Activated CD4-positive, alpha-beta T cell treated with anti-CD3 and anti-CD28 coated beads, Interleukin-2, amount 10 ng/mL, durations not matched to agents 24 days and 14 days (primary cell): ENCODE measurements at regions of chr6 and their contacts with region 1.

Region 1: DNA sequence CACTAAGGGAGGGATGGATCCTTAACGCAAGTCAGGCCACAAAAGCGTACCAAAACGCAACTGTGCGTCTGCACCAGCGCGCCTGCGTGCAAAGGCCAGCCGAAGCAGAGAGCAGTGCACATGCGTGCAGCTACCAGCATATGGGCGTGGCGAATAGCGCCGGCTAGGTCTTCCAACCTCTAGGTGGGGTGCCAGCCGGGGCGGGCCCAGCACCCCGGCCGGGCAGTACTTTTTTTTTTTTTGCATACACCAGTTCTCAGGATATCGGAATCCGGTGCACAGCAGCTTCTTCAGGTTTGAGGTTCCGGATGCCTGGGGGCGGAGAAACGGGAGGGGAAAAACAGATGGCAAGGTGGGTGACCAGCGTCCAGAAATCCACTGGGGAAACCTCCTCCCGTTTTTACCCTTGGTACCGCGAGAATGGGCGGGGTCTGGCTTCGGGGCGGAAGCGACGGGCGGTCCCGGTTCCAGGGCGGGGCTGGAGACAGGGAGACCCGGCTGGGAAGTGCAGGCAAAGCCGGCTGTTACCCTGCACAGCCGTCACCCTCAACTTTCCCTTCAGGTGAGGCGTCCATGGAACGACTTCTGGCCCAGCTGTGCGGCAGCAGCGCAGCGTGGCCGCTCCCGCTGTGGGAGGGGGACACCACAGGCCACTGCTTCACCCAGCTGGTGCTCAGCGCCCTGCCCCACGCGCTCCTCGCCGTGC is at the start of gene ABCC10:
- DNase-seq: peak; percentile 98
- H3K4me3 Mint-ChIP-seq: peak within 1 kb of the TSS; percentile 98
- H3K27ac Mint-ChIP-seq: peak within 1 kb of the TSS; percentile 98
- H3K4me1 Mint-ChIP-seq: peaks cover 13% of the 10 kb centered on the region
- H3K27me3 Mint-ChIP-seq: no peaks in the 10 kb centered on the region
- total RNA-seq, gene ABCC10: 38.2 and 40.0 TPM in 2 replicates

Region 2: DNA sequence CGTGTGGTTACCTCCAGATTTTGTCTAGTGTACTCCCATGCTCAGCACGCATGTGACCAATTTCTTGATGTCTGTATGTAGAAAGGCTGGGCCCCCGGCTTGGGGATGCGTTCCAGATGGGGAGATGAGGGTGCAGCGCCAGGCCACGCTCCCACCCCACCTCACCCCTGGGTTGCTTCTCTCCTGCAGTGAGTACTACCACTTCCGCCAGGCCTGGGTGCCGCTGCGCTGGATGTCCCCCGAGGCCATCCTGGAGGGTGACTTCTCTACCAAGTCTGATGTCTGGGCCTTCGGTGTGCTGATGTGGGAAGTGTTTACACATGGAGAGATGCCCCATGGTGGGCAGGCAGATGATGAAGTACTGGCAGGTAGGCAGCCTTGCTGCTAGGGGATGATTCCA is 268.0 kb before region 1 on chr6:
- intact Hi-C with region 1: no loop called
- DNase-seq: no peak
- H3K4me3 Mint-ChIP-seq: no peak overlapping the region
- H3K27ac Mint-ChIP-seq: no peak overlapping the region
- H3K4me1 Mint-ChIP-seq: no peaks in the 10 kb centered on the region
- H3K27me3 Mint-ChIP-seq: peaks cover 3% of the 10 kb centered on the region

Region 3: DNA sequence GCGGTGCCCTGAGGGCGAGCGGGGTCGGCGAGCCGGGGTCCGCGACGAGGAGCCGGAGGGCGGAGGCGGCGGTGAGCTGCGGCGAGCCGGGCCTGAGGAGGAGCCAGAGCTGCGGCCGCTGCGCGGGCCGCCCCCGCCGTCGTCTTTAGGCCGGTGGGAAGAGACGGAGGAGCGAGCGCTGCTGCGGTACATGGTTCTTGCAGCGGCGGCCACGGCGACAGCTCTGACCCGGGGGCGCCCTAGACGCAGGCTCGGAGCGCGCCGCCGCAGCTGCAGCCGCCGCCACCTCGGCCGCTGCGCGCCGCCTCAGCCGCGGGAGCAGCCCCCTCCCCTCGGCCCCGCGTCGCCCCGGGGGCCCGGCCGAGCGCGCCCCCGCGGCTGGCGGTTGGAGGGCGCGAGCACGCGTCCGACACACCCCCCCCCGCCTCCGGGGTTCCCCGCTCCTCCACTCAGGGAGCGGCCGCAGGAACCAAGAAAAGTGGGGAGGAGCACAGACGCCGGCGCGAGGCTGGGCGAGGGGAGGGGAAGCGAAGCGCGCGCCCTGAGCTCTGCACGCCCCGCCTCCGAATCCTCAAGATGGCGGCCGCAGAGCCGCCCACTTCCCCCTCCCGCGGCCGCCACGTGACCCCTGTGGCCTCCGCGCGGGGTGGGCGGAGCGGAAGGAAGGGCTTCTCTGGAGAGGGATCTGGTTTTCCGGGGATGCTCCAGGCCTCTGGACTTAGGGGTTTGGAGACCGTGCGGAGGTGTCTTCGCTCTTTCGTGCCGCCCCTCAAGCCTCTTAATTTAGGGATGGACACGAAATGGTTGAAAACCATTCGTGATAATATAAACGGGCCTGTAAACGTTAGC is 58.2 kb before region 1 on chr6 and contains the start of gene ZNF318:
- intact Hi-C with region 1: loop called (anchors 1 kb)
- DNase-seq: peak; percentile 98
- H3K4me3 Mint-ChIP-seq: peak within 1 kb of the TSS; percentile 85
- H3K27ac Mint-ChIP-seq: peak within 1 kb of the TSS; percentile 94
- H3K4me1 Mint-ChIP-seq: peaks cover 35% of the 10 kb centered on the region
- H3K27me3 Mint-ChIP-seq: peaks cover 1% of the 10 kb centered on the region
- total RNA-seq, gene ZNF318: 9.3 and 10.3 TPM in 2 replicates

Region 4: GRCh38 chr6:43454696-43455530 is 27.4 kb after region 1 on chr6:
- intact Hi-C with region 1: loop called (anchors 1 kb)
- DNase-seq: peak; percentile 71
- H3K4me3 Mint-ChIP-seq: peak overlapping the region; percentile 84
- H3K27ac Mint-ChIP-seq: peak overlapping the region; percentile 34
- H3K4me1 Mint-ChIP-seq: peaks cover 15% of the 10 kb centered on the region
- H3K27me3 Mint-ChIP-seq: peaks cover 30% of the 10 kb centered on the region

Region 5: DNA sequence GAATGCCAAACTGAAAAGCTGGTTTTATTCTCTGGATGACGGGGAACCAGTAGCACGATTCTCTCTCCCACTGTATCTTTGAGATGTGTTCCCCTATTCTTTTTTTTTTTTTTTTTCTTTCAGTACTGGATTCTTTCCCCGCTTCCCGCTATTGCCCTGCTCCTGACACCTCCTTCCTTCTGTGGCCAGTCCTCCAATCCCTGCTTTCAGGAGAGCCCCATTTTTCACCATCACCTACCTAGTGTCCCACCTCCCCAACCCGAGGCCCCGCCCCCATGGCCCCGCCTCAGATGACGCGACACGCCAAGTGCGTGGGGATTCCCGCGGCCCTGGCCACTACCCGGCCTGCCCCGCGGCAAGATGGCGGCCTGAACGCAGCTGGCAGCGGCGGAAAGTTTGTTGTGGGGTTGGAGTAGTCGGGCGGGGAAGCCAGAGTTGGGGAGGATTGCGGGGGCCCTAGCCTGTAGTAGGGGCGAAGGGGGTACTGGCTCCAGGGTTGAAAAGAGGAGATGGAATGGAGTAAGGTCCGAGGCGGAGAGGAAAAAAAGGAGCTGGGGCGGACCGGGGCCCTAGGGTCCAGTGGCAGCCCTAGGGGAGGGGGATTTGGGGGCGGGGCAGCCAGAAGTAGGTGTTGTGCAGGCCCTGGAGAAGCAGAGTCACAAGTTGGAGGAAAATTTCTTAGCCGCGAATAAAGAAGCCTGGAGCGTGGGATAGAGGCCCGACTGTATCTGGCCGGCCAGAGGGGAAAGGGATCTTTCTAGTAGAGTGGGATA is 49.9 kb after region 1 on chr6 and contains the start of gene TJAP1:
- intact Hi-C with region 1: loop called (anchors 1 kb)
- DNase-seq: peak; percentile 99
- H3K4me3 Mint-ChIP-seq: peak within 1 kb of the TSS; percentile 100
- H3K27ac Mint-ChIP-seq: peak within 1 kb of the TSS; percentile 98
- H3K4me1 Mint-ChIP-seq: peaks cover 35% of the 10 kb centered on the region
- H3K27me3 Mint-ChIP-seq: no peaks in the 10 kb centered on the region
- total RNA-seq, gene TJAP1: 40.7 and 41.1 TPM in 2 replicates